A549 (cell line): ENCODE measurements at regions of chr20 and their contacts with region 1.

Region 1: GRCh38 chr20:6074145-6074561 is 20.3 kb upstream of the LRRN4 start:
- DNase-seq: peak; percentile 52 to 57
- ATAC-seq: peak; percentile 82 to 88
- H3K4me3 ChIP-seq: no peak overlapping the region
- H3K27ac ChIP-seq: no peak overlapping the region
- H3K4me1 ChIP-seq: 0 out of 3 replicates have a peak, but pooled peaks cover 3% of the 10 kb centered on the region
- CTCF ChIP-seq: no peak
- EP300 ChIP-seq: no peak
- POLR2A ChIP-seq: no peak
- RAD21 ChIP-seq: peak; percentile 24 to 34; a peak in 3 of 5 replicates

Region 2: GRCh38 chr20:5881714-5882113 is 192.4 kb before region 1 on chr20:
- CTCF ChIA-PET with region 1: no interaction called
- POLR2A ChIA-PET with region 1: no interaction called
- DNase-seq: no peak
- ATAC-seq: no peak; a peak in 1 of 6 replicates
- H3K4me3 ChIP-seq: no peak overlapping the region
- H3K27ac ChIP-seq: no peak overlapping the region
- H3K4me1 ChIP-seq: no peaks in the 10 kb centered on the region
- CTCF ChIP-seq: no peak
- EP300 ChIP-seq: no peak
- POLR2A ChIP-seq: no peak
- RAD21 ChIP-seq: no peak

Region 3: GRCh38 chr20:5925551-5925950 is 148.6 kb before region 1 on chr20:
- CTCF ChIA-PET with region 1: no interaction called
- POLR2A ChIA-PET with region 1: no interaction called
- DNase-seq: no peak
- ATAC-seq: no peak
- H3K4me3 ChIP-seq: no peak overlapping the region
- H3K27ac ChIP-seq: no peak overlapping the region
- H3K4me1 ChIP-seq: no peaks in the 10 kb centered on the region
- CTCF ChIP-seq: no peak
- EP300 ChIP-seq: no peak
- POLR2A ChIP-seq: no peak
- RAD21 ChIP-seq: no peak

Region 4: GRCh38 chr20:5996765-5997164 is 77.4 kb before region 1 on chr20:
- CTCF ChIA-PET with region 1: no interaction called
- POLR2A ChIA-PET with region 1: no interaction called
- DNase-seq: peak in 1 of 2 experiments; percentile 35
- ATAC-seq: peak; percentile 59 to 76; a peak in 5 of 6 replicates
- H3K4me3 ChIP-seq: no peak overlapping the region
- H3K27ac ChIP-seq: no peak overlapping the region
- H3K4me1 ChIP-seq: peaks cover 6% of the 10 kb centered on the region
- CTCF ChIP-seq: no peak
- EP300 ChIP-seq: no peak
- POLR2A ChIP-seq: no peak
- RAD21 ChIP-seq: no peak

Region 5: GRCh38 chr20:6061544-6061943 is 12.6 kb before region 1 on chr20:
- CTCF ChIA-PET with region 1: interaction called, 26 read pairs
- POLR2A ChIA-PET with region 1: no interaction called
- DNase-seq: no peak
- ATAC-seq: peak in 1 of 2 experiments; percentile 28; a peak in 2 of 6 replicates
- H3K4me3 ChIP-seq: no peak overlapping the region
- H3K27ac ChIP-seq: no peak overlapping the region
- H3K4me1 ChIP-seq: no peaks in the 10 kb centered on the region
- CTCF ChIP-seq: no peak
- EP300 ChIP-seq: no peak
- POLR2A ChIP-seq: no peak
- RAD21 ChIP-seq: no peak

Region 6: DNA sequence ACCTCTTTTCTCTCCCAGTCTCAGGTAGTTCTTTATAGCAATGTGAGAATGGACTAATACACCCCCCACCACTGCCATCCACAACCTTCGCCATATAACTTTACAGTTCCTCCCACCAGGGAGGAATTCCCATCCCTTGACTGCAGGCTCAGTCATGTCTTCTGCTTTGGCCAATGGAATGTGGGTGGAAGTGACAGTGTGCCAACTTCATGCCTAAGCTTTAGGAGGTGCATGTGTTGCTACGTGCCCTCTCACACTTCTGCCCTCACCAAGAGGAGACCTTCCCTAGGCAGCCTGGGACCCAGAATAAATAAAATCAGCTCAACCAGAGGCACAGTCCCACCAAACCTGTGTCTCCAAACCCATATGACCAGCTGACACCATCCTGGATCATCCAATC is 12.7 kb after region 1 on chr20:
- CTCF ChIA-PET with region 1: interaction called, 24 read pairs
- POLR2A ChIA-PET with region 1: no interaction called
- DNase-seq: no peak
- ATAC-seq: no peak
- H3K4me3 ChIP-seq: no peak overlapping the region
- H3K27ac ChIP-seq: no peak overlapping the region
- H3K4me1 ChIP-seq: no peaks in the 10 kb centered on the region
- CTCF ChIP-seq: no peak
- EP300 ChIP-seq: no peak
- POLR2A ChIP-seq: no peak
- RAD21 ChIP-seq: no peak